Colonic mucosa (tissue), 4 donors: ENCODE measurements at regions of chr18 and their contacts with region 1.

Region 1: GRCh38 chr18:74353169-74353775 is 37.6 kb downstream of the C18orf63 start:
- DNase-seq: peak; percentile 69
- H3K4me3 ChIP-seq: no peak overlapping the region
- H3K27ac ChIP-seq: no peak overlapping the region
- H3K4me1 ChIP-seq: no peaks in the 10 kb centered on the region
- H3K27me3 ChIP-seq: no peaks in the 10 kb centered on the region
- CTCF ChIP-seq: peak; percentile 67

Region 2: DNA sequence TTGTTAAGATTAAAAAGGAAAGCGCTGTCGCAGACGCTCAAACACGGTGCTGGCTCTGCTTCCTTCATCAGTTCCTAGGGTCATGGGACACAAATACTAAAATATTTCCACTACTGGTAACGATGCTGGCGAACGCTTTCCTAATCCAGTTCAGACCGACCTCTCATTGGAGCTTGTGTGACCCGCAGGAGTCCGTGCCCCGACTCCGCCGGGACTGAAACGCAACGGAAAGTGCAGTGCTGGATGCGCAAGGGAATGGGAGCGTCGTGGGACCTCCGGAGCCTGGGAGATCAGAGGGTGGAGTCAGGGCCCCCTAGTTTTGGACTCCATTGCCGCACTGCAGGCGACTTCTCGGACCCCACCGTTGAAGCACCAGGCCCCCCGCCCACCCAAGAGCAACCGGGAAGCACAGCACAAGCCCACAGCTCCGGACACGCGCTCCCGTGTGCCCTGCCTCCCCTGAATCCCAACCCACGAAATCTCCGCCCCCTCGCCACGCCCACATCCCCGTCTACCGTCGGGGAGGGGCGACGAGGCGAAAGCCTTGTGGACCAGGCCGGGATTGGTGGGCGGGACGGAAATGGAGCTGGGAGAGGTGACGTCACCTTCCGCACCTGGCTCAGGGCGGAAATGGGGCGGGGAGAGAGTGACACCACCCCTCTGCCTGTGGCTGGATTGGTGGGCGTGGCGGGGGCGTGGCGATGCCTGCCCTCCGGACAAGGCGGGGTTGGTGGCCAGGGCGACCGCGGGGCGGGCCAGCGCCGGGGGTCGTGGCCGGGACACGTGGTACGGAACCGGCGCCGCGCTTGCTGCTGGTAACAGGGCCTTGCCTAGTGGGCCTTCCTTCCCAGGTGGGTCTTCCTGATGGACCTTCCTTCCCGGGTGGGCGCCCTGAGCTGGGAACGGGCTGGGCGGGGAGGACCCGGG is 142.6 kb after region 1 on chr18 and contains the start of gene CNDP2:
- intact Hi-C with region 1: loop called (anchors 1 kb)
- DNase-seq: peak; percentile 100
- H3K4me3 ChIP-seq: peak within 1 kb of the TSS; percentile 96
- H3K27ac ChIP-seq: peak within 1 kb of the TSS; percentile 91
- H3K4me1 ChIP-seq: peaks cover 20% of the 10 kb centered on the region
- H3K27me3 ChIP-seq: no peaks in the 10 kb centered on the region
- CTCF ChIP-seq: no peak
- total RNA-seq, gene CNDP2: 206 to 261 TPM

Region 3: GRCh38 chr18:74551936-74552555 is 198.8 kb after region 1 on chr18:
- intact Hi-C with region 1: loop called (anchors 2 kb)
- DNase-seq: peak; percentile 90
- H3K4me3 ChIP-seq: no peak overlapping the region
- H3K27ac ChIP-seq: no peak overlapping the region
- H3K4me1 ChIP-seq: no peaks in the 10 kb centered on the region
- H3K27me3 ChIP-seq: no peaks in the 10 kb centered on the region
- CTCF ChIP-seq: peak; percentile 79